ENCODE measurements at regions of chr17 and their contacts with region 1.

Region 1: DNA sequence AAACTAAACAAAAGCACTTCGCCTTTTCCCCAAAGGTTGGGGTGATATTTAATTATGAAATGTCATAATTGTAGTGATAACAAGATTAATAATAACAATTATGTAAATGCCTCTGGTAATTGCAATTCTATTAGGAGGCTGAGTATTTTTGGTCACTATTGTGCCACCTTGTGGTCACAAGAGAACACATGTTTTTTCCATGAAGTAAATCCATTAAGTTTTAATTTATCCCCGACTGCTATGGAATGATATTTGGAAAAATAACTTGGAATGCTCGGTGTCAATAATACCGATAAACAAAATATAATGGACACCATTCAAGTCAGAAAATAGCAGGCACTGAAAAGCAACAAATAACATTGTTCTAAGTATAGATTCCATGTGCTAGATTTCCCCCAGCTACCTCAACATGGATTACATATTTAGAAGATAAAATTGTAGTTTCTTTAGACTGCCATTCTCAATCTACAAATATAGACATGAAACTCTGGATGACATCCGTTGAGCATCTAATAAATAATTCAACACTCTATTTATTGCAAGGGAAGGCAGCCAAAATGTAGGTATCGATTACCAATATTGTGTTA is 25.0 kb upstream of the KCNJ2 start:
- DNase-seq: no peak
- H3K4me3 ChIP-seq: no peak overlapping the region
- H3K27ac ChIP-seq: no peak overlapping the region
- H3K27me3 ChIP-seq: no peaks in the 10 kb centered on the region
- CTCF ChIP-seq: peak; percentile 60

Region 2: GRCh38 chr17:69575346-69575761 is 569.0 kb before region 1 on chr17:
- CTCF ChIA-PET with region 1: interaction called, 30 read pairs
- POLR2A ChIA-PET with region 1: no interaction called
- DNase-seq: peak; percentile 48
- H3K4me3 ChIP-seq: no peak overlapping the region
- H3K27ac ChIP-seq: no peak overlapping the region
- H3K27me3 ChIP-seq: no peaks in the 10 kb centered on the region
- CTCF ChIP-seq: no peak

Region 3: GRCh38 chr17:70168977-70169708 is 24.8 kb after region 1 on chr17 and contains the start of gene KCNJ2:
- CTCF ChIA-PET with region 1: interaction called, 10 read pairs
- POLR2A ChIA-PET with region 1: no interaction called
- DNase-seq: no peak
- H3K4me3 ChIP-seq: peak within 1 kb of the TSS; percentile 71
- H3K27ac ChIP-seq: no peak within 1 kb of the TSS
- H3K27me3 ChIP-seq: peaks cover 14% of the 10 kb centered on the region
- CTCF ChIP-seq: no peak
- polyA plus RNA-seq, gene KCNJ2: 1.7 and 2.4 TPM in 2 replicates

Region 4: GRCh38 chr17:70797166-70797565 is 652.8 kb after region 1 on chr17:
- CTCF ChIA-PET with region 1: no interaction called
- POLR2A ChIA-PET with region 1: no interaction called
- DNase-seq: no peak
- H3K4me3 ChIP-seq: no peak overlapping the region
- H3K27ac ChIP-seq: no peak overlapping the region
- H3K27me3 ChIP-seq: no peaks in the 10 kb centered on the region
- CTCF ChIP-seq: no peak

Measured in AG04450 (cell line).